Heart left ventricle (tissue), 16 donors: ENCODE measurements at regions of chr21 and their contacts with region 1.

Region 1: DNA sequence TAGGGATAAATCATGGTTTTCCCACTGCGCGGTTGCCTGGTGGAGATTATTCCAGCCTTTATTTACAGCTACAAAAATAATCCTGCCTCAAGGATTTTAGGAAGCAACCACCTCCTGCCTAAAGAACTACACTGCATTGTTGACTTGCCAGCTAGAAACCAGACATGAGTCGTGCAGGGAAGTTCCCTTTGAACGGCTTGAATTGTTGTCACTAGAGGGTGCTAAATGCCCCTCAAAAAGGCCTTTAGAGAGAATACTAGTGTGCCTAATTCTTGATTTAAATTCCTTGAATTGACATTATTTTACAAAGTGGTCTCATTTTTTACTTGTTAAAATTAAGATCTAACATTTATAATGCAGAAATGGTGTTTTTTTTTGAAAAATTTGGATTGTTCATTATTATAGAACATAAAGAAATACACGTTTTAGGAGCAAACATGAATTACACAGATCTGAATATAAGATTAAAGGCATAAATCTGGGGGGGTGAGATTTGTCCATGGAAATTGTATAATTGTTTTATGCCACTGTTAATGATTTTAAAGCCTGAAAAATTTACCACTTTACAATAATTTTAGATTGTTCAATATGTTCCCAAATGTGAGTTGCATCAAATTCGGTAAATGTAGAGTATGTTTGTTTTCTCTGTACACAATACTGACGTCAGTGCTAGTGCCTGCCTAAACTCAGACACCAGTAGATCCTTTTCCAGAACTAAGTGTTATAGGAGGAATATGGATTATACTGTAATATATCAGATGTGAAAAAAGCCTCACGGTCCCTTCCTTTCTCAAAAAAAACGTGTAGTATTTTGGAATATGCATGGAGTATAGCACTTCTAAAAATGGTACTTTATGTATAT is 7.6 kb upstream of the ERG start:
- DNase-seq: peak in 1 of 5 donors; percentile 52
- ATAC-seq: peak; percentile 83 to 92 (median 84)
- H3K4me3 ChIP-seq: peak overlapping the region in 4 of 12 donors; percentile 1 to 39 (median 12)
- H3K27ac ChIP-seq: no peak overlapping the region
- H3K4me1 ChIP-seq: peaks cover 0 to 28% (median 6%) of the 10 kb centered on the region in 12 donors
- H3K27me3 ChIP-seq: no peaks in the 10 kb centered on the region
- CTCF ChIP-seq: peak; percentile 57 to 87 (median 73)
- POLR2A ChIP-seq: no peak

Region 2: GRCh38 chr21:38712071-38712470 is 206.2 kb after region 1 on chr21:
- intact Hi-C with region 1: loop called in 8 of 10 experiments (anchors 5 to 10 kb)
- DNase-seq: peak in 1 of 5 donors; percentile 40
- ATAC-seq: peak in 3 of 4 donors; percentile 55 to 62 (median 56)
- H3K4me3 ChIP-seq: no peak overlapping the region
- H3K27ac ChIP-seq: no peak overlapping the region
- H3K4me1 ChIP-seq: no peaks in the 10 kb centered on the region
- H3K27me3 ChIP-seq: peaks cover 0 to 3% (median 0%) of the 10 kb centered on the region in 9 donors
- CTCF ChIP-seq: peak; percentile 19 to 61 (median 40)
- POLR2A ChIP-seq: no peak